Right cardiac atrium (tissue), 5 donors: ENCODE measurements at regions of chr19 and their contacts with region 1.

Region 1: GRCh38 chr19:56403764-56404704 is at the start of gene ZNF583:
- DNase-seq: peak; percentile 98 to 99 (median 99)
- ATAC-seq: peak; percentile 99
- H3K4me3 ChIP-seq: peak within 1 kb of the TSS; percentile 53
- H3K27ac ChIP-seq: peak within 1 kb of the TSS; percentile 80
- H3K4me1 ChIP-seq: peaks cover 9% of the 10 kb centered on the region
- H3K27me3 ChIP-seq: no peaks in the 10 kb centered on the region
- total RNA-seq, gene ZNF583: 5.6 to 8.6 (median 7.0) TPM

Region 2: GRCh38 chr19:56367829-56368711 is 36.0 kb before region 1 on chr19:
- intact Hi-C with region 1: no loop called
- DNase-seq: peak; percentile 97 to 99 (median 97)
- ATAC-seq: peak; percentile 99 to 100
- H3K4me3 ChIP-seq: peak overlapping the region; percentile 65
- H3K27ac ChIP-seq: peak overlapping the region; percentile 86
- H3K4me1 ChIP-seq: peaks cover 4% of the 10 kb centered on the region
- H3K27me3 ChIP-seq: no peaks in the 10 kb centered on the region

Region 3: GRCh38 chr19:56567274-56568120 is 163.5 kb after region 1 on chr19 and contains the start of gene ZNF470:
- intact Hi-C with region 1: loop called in 1 of 4 experiments (anchors 10 kb)
- DNase-seq: peak; percentile 97 to 98 (median 98)
- ATAC-seq: peak; percentile 100
- H3K4me3 ChIP-seq: peak within 1 kb of the TSS; percentile 82
- H3K27ac ChIP-seq: peak within 1 kb of the TSS; percentile 88
- H3K4me1 ChIP-seq: peaks cover 7% of the 10 kb centered on the region
- H3K27me3 ChIP-seq: no peaks in the 10 kb centered on the region
- total RNA-seq, gene ZNF470: 3.5 to 5.2 (median 4.8) TPM